HepG2 (cell line): ENCODE measurements at regions of chr16 and their contacts with region 1.

Region 1: GRCh38 chr16:23770744-23771426 is 16.1 kb downstream of the CHP2 start:
- DNase-seq: no peak
- ATAC-seq: no peak
- H3K4me3 ChIP-seq: no peak overlapping the region
- H3K27ac ChIP-seq: no peak overlapping the region
- H3K4me1 ChIP-seq: no peaks in the 10 kb centered on the region
- H3K27me3 ChIP-seq: no peaks in the 10 kb centered on the region
- CTCF ChIP-seq: no peak
- EP300 ChIP-seq: no peak
- POLR2A ChIP-seq: no peak
- RAD21 ChIP-seq: no peak

Region 2: GRCh38 chr16:23694644-23695373 is 76.1 kb before region 1 on chr16:
- CTCF ChIA-PET with region 1: no interaction called
- POLR2A ChIA-PET with region 1: no interaction called
- in situ Hi-C with region 1: no loop called
- intact Hi-C with region 1: no loop called
- DNase-seq: peak; percentile 49
- ATAC-seq: peak; percentile 80
- H3K4me3 ChIP-seq: peak overlapping the region; percentile 42 to 69 (median 50); a peak in 5 of 6 replicates
- H3K27ac ChIP-seq: peak overlapping the region; percentile 9
- H3K4me1 ChIP-seq: peaks cover 28% of the 10 kb centered on the region
- H3K27me3 ChIP-seq: no peaks in the 10 kb centered on the region
- CTCF ChIP-seq: no peak
- EP300 ChIP-seq: no peak
- POLR2A ChIP-seq: no peak
- RAD21 ChIP-seq: no peak; the same call in 1 of the 2 replicates

Region 3: DNA sequence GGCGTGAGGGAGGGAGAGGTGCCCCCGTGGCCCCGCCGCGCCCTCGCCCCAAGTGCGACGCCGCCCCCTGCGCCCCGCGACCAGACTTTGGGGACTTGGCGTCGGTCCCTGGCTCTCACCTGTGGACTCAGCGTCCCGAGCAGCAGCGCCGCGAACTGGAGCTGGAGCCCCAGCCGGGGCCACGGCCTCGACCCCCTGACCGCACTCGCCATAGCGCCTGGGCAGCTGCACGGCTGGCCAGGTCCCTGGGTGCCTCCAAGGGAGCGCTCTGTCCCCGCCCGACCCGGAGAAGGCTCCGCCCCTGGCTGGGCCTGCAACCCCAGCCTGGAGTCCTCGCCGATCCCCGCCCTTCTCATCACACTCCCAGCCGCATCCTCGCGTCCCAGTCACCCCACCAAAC is 57.9 kb before region 1 on chr16 and contains the start of gene ERN2:
- CTCF ChIA-PET with region 1: no interaction called
- POLR2A ChIA-PET with region 1: no interaction called
- in situ Hi-C with region 1: loop called (anchors 10 kb)
- intact Hi-C with region 1: no loop called
- DNase-seq: no peak
- ATAC-seq: no peak
- H3K4me3 ChIP-seq: no peak within 1 kb of the TSS
- H3K27ac ChIP-seq: no peak within 1 kb of the TSS
- H3K4me1 ChIP-seq: peaks cover under 1% of the 10 kb centered on the region; the same call in 1 of the 2 replicates
- H3K27me3 ChIP-seq: peaks cover 3 to 8% of the 10 kb centered on the region in 2 experiments; a peak in 1 of 5 replicates
- CTCF ChIP-seq: no peak
- EP300 ChIP-seq: no peak
- POLR2A ChIP-seq: no peak
- RAD21 ChIP-seq: no peak
- total RNA-seq, gene ERN2: 0.42 and 2.2 TPM in 2 replicates

Region 4: DNA sequence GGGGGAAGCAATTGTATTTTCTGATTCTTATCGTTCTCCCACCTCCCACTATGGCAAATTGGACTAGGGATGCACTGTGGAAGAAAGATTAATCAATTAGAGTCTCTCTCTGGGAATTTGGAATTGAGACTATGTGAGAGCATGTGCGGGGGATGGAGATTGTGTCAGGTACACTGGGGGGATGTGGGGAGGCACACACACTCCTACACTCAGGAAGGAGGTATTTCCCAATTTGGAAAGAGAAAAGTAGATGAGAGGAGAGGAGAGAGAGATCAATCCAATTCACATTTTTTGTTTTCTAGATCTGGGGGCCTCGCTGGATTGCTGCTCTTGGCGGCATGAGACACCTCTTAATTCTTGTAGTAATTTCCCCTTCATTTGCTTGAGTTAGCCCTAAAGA is 50.6 kb after region 1 on chr16:
- CTCF ChIA-PET with region 1: no interaction called
- POLR2A ChIA-PET with region 1: no interaction called
- in situ Hi-C with region 1: no loop called
- intact Hi-C with region 1: no loop called
- DNase-seq: no peak
- ATAC-seq: no peak
- H3K4me3 ChIP-seq: no peak overlapping the region
- H3K27ac ChIP-seq: no peak overlapping the region
- H3K4me1 ChIP-seq: no peaks in the 10 kb centered on the region
- H3K27me3 ChIP-seq: no peaks in the 10 kb centered on the region; a peak in 1 of 5 replicates
- CTCF ChIP-seq: no peak
- EP300 ChIP-seq: no peak
- POLR2A ChIP-seq: no peak
- RAD21 ChIP-seq: no peak

Region 5: DNA sequence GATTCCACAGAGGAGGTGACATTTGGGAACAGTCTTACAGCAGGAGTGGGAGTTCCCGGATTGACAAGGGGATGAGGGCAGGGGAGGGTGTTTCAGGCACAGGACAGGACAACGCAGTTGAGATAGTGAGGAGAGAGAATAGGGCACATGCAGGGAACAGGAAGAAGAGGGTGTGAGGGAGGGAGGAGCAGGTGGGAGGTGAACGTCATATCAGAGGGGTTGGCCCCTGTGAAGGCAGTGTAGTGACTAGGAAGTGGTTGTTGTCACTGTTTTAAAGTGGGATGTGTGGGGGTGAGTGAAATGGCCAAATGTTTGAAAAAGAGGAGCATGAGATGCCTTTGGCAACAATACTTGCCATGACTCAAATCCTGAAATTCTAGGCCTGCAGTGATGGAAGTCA is 77.1 kb after region 1 on chr16:
- CTCF ChIA-PET with region 1: no interaction called
- POLR2A ChIA-PET with region 1: no interaction called
- in situ Hi-C with region 1: no loop called
- intact Hi-C with region 1: loop called (anchors 2 kb)
- DNase-seq: no peak
- ATAC-seq: no peak
- H3K4me3 ChIP-seq: no peak overlapping the region
- H3K27ac ChIP-seq: no peak overlapping the region
- H3K4me1 ChIP-seq: no peaks in the 10 kb centered on the region
- H3K27me3 ChIP-seq: peaks cover 1 to 5% of the 10 kb centered on the region in 2 experiments; a peak in 2 of 5 replicates
- CTCF ChIP-seq: no peak
- EP300 ChIP-seq: no peak
- POLR2A ChIP-seq: no peak
- RAD21 ChIP-seq: no peak